Heart left ventricle (tissue), 16 donors: ENCODE measurements at regions of chr1 and their contacts with region 1.

Region 1: DNA sequence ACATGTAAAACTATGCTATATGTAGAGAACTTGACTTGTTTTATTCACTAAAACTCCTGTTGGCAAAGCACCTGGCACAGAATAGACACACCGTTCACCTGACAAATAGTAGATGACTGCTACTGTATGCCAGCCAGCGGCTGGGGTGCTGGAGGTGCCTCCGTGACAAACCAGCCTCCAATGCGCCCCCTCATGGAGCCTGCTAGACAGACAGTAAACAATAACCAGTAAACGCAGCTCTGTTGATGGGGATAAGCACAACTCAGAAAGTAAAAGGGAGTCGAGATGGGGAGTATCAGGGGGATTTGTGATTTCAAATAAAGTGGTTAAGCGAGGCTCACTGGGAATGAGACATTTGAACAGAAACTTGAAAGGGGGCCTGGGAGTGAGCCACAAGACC is 107.2 kb downstream of the PRDM2 start:
- DNase-seq: no peak
- ATAC-seq: no peak
- H3K4me3 ChIP-seq: no peak overlapping the region
- H3K27ac ChIP-seq: no peak overlapping the region
- H3K4me1 ChIP-seq: peaks cover 0 to 8% (median 2%) of the 10 kb centered on the region in 12 donors
- H3K27me3 ChIP-seq: no peaks in the 10 kb centered on the region
- CTCF ChIP-seq: peak in 3 of 12 donors; percentile 19 to 30 (median 21)
- POLR2A ChIP-seq: no peak

Region 2: GRCh38 chr1:13674377-13674776 is 132.8 kb before region 1 on chr1:
- intact Hi-C with region 1: loop called in 6 of 10 experiments (anchors 5 to 10 kb)
- DNase-seq: no peak
- ATAC-seq: no peak
- H3K4me3 ChIP-seq: no peak overlapping the region
- H3K27ac ChIP-seq: no peak overlapping the region
- H3K4me1 ChIP-seq: no peaks in the 10 kb centered on the region
- H3K27me3 ChIP-seq: peaks cover 0 to 16% (median 0%) of the 10 kb centered on the region in 9 donors
- CTCF ChIP-seq: no peak
- POLR2A ChIP-seq: no peak

Region 3: DNA sequence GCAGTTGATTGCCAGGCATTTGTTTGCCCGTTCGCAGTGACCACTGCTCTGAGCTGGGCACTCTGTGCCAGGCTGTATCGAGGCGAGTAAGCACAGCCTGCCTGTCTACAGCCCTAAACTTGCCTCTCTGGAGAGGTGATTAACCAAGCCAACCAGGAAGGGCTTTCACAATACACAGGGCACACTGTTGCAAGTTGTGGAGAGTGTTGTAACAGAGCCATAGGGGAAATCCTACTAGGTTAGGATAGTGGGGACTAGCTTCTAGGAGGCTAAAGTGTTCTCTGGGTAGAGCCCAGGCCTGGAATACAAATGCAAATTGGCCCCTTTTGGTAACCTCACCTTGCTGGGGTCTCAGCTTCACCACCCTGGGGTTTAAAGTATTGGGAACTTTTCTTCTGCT is 83.4 kb before region 1 on chr1:
- intact Hi-C with region 1: no loop called
- DNase-seq: no peak
- ATAC-seq: peak in 3 of 4 donors; percentile 11 to 81 (median 31)
- H3K4me3 ChIP-seq: no peak overlapping the region
- H3K27ac ChIP-seq: peak overlapping the region in 1 of 12 donors; percentile 10
- H3K4me1 ChIP-seq: peaks cover 0 to 13% (median 0%) of the 10 kb centered on the region in 12 donors
- H3K27me3 ChIP-seq: no peaks in the 10 kb centered on the region
- CTCF ChIP-seq: no peak
- POLR2A ChIP-seq: no peak

Region 4: DNA sequence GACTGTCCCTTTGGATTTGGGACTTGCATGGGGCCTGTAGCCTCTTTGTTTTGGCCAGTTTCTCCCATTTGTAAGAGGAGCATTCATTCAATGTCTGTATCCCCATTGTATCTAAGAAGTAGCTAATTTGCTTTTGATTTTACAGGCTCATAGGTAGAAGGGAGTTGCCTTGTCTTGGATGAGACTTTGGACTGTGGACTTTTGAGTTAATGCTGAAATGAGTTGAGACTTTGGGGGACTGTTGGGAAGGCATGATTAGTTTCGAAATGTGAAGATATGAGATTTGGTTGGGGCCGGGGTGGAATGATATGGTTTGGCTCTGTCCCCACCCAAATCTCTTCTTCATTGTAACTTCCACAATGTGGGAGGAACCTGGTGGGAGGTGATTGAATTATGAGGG is 44.5 kb after region 1 on chr1:
- intact Hi-C with region 1: no loop called
- DNase-seq: no peak
- ATAC-seq: no peak
- H3K4me3 ChIP-seq: no peak overlapping the region
- H3K27ac ChIP-seq: no peak overlapping the region
- H3K4me1 ChIP-seq: no peaks in the 10 kb centered on the region
- H3K27me3 ChIP-seq: peaks cover 0 to 12% (median 0%) of the 10 kb centered on the region in 9 donors
- CTCF ChIP-seq: no peak
- POLR2A ChIP-seq: no peak